Mammary epithelial cell (primary cell): ENCODE measurements at regions of chr1 and their contacts with region 1.

Region 1: GRCh38 chr1:21334214-21335087 is 44.2 kb upstream of the ECE1 start:
- DNase-seq: peak; percentile 90
- H3K4me3 ChIP-seq: peak overlapping the region; percentile 25 to 46 (median 36)
- H3K27ac ChIP-seq: peak overlapping the region; percentile 48
- H3K4me1 ChIP-seq: peaks cover 33% of the 10 kb centered on the region
- H3K27me3 ChIP-seq: no peaks in the 10 kb centered on the region
- CTCF ChIP-seq: peak; percentile 91 to 92

Region 2: GRCh38 chr1:21255278-21255942 is 79.0 kb before region 1 on chr1:
- CTCF ChIA-PET with region 1: interaction called, 3 read pairs
- dilution Hi-C with region 1: no loop called
- in situ Hi-C with region 1: no loop called
- intact Hi-C with region 1: loop called (anchors 1 kb)
- DNase-seq: peak; percentile 72
- H3K4me3 ChIP-seq: no peak overlapping the region
- H3K27ac ChIP-seq: no peak overlapping the region
- H3K4me1 ChIP-seq: peaks cover 33% of the 10 kb centered on the region
- H3K27me3 ChIP-seq: no peaks in the 10 kb centered on the region
- CTCF ChIP-seq: peak; percentile 87 to 91

Region 3: DNA sequence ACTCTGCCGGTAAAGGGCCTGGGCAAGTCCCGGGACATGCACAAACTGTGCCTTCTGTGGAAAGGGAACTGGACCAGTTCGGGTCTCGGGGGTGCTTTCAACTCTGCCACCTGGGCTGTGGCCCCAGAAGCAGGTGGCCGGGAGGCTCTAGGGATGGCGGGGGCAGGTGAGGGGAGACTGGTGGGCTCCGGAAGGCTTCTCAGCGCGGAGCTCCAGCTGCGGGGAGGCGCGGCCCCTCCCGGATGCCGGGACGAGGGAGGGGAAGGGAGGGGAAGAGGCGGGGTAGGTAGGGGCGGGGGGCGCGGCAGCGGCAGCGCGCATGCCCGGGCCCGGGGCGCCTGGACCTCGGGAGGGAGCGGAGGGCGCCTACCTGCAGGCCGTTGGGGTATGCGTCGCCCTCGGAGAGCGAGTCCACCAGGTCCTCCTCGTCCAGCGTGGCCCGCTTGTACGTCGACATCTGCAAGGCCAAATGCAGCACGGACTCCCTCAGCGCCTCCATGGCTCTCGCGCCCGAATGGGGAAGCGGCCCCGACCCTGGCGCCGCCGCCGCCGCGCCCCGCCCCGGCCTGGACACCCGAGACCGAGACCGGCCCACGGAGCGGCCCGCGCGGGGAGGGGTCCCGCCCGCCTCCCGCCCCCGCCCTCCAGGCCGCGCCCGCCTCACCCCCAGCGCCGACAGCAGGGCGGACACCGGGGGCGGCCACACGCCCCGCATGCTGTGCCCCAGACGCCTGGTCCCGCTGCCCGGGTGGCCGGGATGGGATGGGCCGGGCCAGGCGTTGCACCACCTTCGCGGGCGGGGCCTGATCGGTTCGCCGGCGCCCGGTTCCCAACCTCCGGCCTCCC is 44.5 kb before region 1 on chr1 and contains the start of gene ECE1:
- CTCF ChIA-PET with region 1: no interaction called
- dilution Hi-C with region 1: loop called (anchors 5 kb)
- in situ Hi-C with region 1: no loop called
- intact Hi-C with region 1: loop called (anchors 1 kb)
- DNase-seq: no peak
- H3K4me3 ChIP-seq: peak within 1 kb of the TSS; percentile 59 to 75 (median 65)
- H3K27ac ChIP-seq: peak within 1 kb of the TSS; percentile 37
- H3K4me1 ChIP-seq: peaks cover 20% of the 10 kb centered on the region
- H3K27me3 ChIP-seq: no peaks in the 10 kb centered on the region
- CTCF ChIP-seq: no peak
- total RNA-seq, gene ECE1: 86.3 to 153 TPM

Region 4: DNA sequence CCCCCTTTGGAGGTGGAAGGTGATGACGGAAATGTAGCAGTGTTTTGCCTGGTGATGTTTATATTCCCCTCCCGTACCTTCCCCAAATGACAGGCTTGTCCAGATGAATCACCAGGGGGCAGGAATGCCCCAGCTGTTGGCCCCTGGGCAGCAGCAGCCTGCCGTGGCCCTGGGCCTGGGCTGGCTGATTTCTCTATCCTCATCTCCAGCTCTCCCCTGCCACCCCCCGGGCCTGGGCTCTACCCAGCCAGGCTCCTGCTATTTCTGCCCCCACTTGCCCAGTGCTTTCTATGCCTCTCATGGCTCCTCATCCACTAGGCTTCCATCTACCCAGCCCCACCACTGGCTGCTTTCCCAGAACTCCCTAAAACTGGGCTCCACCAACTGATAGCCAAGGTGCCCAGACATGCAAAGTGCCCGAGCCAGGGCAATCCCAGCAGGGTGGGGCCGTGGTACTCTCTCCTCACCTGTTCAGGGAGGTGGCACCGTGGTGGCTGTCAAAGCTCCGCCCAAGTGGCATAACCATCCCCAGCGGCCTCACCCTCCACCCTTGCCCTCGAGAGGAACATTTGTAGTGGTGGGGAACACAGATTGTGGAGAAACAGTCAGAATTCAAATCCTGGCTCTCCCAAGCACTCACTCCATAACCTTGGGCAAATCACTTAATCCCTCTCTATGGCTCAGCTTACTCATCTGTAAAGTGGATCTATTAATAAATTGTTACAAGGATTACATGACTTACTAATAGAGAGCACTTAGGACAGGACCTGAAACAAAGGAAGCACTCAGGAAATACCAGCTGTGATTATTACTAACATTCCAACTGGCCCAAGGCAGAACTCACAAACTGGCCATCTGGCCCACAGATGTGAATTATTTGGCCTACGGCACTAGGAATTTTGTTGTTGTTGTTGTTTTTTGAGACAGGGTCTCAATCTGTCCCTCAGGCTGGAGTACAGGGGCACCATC is 31.4 kb before region 1 on chr1:
- CTCF ChIA-PET with region 1: no interaction called
- dilution Hi-C with region 1: no loop called
- in situ Hi-C with region 1: no loop called
- intact Hi-C with region 1: loop called (anchors 1 kb)
- DNase-seq: peak; percentile 76
- H3K4me3 ChIP-seq: no peak overlapping the region
- H3K27ac ChIP-seq: peak overlapping the region; percentile 53
- H3K4me1 ChIP-seq: peaks cover 45% of the 10 kb centered on the region
- H3K27me3 ChIP-seq: no peaks in the 10 kb centered on the region
- CTCF ChIP-seq: peak in 1 of 2 donors; percentile 36

Region 5: GRCh38 chr1:21308847-21309652 is 25.4 kb before region 1 on chr1:
- CTCF ChIA-PET with region 1: interaction called, 4 read pairs
- dilution Hi-C with region 1: no loop called
- in situ Hi-C with region 1: no loop called
- intact Hi-C with region 1: loop called (anchors 2 kb)
- DNase-seq: peak; percentile 90
- H3K4me3 ChIP-seq: no peak overlapping the region
- H3K27ac ChIP-seq: peak overlapping the region; percentile 2
- H3K4me1 ChIP-seq: peaks cover 45% of the 10 kb centered on the region
- H3K27me3 ChIP-seq: no peaks in the 10 kb centered on the region
- CTCF ChIP-seq: no peak